Activated CD4-positive, alpha-beta T cell treated with anti-CD3 and anti-CD28 coated beads, Interleukin-2, amount 10 ng/mL, durations not matched to agents 7 days and 5 days (primary cell): ENCODE measurements at regions of chr14 and their contacts with region 1.

Region 1: DNA sequence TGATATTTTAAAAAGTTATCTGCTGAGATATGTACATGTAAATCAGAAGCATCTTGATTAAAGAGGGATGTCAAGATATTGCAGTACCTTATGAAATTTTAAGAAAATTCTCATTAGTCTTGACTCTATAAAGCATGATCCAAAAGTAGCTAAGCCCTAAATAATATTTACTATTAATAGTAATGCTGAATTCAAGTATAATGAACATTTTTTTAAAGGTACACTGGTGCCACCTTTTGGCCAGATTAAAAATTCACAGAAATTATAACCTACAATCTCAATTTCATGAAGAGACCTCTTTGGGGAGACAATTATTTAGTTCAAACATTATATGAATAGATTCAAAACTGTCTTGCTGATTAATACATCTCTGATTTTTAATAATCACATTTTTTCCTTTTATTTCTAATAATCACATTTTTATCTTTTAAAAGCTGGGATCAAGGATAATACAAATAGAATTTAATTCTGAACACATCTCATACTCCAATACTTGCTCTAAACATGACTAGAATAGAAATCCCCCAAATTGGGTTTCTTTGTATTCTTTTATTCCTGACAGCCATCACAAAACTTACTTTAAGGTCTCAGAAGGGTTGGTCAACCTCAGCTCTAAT is 13.4 kb downstream of the AKAP5 start:
- DNase-seq: peak; percentile 18
- H3K4me3 Mint-ChIP-seq: no peak overlapping the region
- H3K27ac Mint-ChIP-seq: no peak overlapping the region
- H3K4me1 Mint-ChIP-seq: peaks cover 8% of the 10 kb centered on the region
- H3K27me3 Mint-ChIP-seq: no peaks in the 10 kb centered on the region

Region 2: DNA sequence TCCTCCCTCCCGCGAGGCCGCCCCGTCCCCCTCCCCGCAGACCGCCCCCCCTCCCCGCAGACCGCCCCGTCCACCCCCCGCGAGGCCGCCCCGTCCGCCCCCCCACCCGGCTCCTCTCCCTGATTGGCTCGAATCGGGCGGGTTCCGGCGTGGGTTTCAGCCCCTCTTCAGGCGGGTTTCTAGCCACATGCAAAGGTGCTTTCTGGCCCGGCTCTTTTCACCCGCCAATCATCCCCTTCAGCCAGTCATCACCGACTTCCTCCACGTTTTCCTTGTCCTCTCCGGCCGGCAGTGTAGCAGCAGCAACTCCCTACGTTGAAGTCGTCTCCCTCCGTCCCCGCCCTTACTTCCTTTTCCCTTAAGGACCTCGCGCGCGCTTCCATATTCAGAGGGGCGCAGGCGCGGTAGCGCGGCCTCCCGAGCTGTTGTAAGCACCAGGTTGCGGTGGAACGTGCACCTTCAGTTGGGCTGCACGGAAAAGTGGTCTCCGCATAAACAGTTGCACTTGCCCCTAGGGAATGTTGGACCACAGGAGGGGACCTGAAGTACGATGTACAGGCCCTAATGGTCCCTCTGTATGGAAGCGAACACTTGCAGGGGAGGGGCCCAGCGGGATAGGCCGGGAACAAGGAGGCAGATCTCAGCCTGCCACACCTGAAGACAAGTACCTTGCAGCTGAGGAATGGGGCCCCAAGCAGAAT is 140.0 kb before region 1 on chr14:
- CTCF ChIA-PET with region 1: interaction called, 10 read pairs
- POLR2A ChIA-PET with region 1: no interaction called
- DNase-seq: peak; percentile 95
- H3K4me3 Mint-ChIP-seq: peak overlapping the region; percentile 89
- H3K27ac Mint-ChIP-seq: peak overlapping the region; percentile 91
- H3K4me1 Mint-ChIP-seq: peaks cover 32% of the 10 kb centered on the region
- H3K27me3 Mint-ChIP-seq: no peaks in the 10 kb centered on the region

Region 3: DNA sequence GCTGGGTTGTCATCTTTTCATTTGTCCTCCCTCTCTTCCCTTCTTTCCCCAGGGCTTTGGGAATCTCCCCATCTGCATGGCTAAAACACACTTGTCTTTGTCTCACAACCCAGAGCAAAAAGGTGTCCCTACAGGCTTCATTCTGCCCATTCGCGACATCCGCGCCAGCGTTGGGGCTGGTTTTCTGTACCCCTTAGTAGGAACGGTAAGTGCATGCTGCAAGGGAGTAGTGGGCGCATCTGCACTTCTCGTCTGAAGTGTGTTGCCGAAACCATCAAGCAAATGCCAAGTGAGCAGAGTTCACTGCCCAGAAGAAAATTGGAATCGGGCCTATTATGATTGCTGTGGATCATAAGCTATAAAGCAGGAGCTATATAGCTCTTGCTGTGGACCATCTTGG is 24.1 kb before region 1 on chr14:
- CTCF ChIA-PET with region 1: no interaction called
- POLR2A ChIA-PET with region 1: no interaction called
- DNase-seq: no peak
- H3K4me3 Mint-ChIP-seq: no peak overlapping the region
- H3K27ac Mint-ChIP-seq: no peak overlapping the region
- H3K4me1 Mint-ChIP-seq: peaks cover 15% of the 10 kb centered on the region
- H3K27me3 Mint-ChIP-seq: no peaks in the 10 kb centered on the region

Region 4: GRCh38 chr14:64496764-64497163 is 18.0 kb after region 1 on chr14:
- CTCF ChIA-PET with region 1: interaction called, 10 read pairs
- POLR2A ChIA-PET with region 1: no interaction called
- DNase-seq: no peak
- H3K4me3 Mint-ChIP-seq: no peak overlapping the region
- H3K27ac Mint-ChIP-seq: no peak overlapping the region
- H3K4me1 Mint-ChIP-seq: peaks cover 61% of the 10 kb centered on the region
- H3K27me3 Mint-ChIP-seq: no peaks in the 10 kb centered on the region

Region 5: GRCh38 chr14:64971943-64972791 is 493.4 kb after region 1 on chr14 and contains the start of gene RAB15:
- CTCF ChIA-PET with region 1: no interaction called
- POLR2A ChIA-PET with region 1: interaction called, 14 read pairs
- DNase-seq: peak; percentile 39
- H3K4me3 Mint-ChIP-seq: peak within 1 kb of the TSS; percentile 78
- H3K27ac Mint-ChIP-seq: peak within 1 kb of the TSS; percentile 73
- H3K4me1 Mint-ChIP-seq: peaks cover 13% of the 10 kb centered on the region
- H3K27me3 Mint-ChIP-seq: peaks cover 7% of the 10 kb centered on the region
- total RNA-seq, gene RAB15: 4.9 to 5.7 TPM